ENCODE measurements at regions of chr20 and their contacts with region 1.

Region 1: GRCh38 chr20:10225439-10226060 is 6.9 kb downstream of the SNAP25 start:
- DNase-seq: no peak
- H3K4me3 ChIP-seq: no peak overlapping the region
- H3K27ac ChIP-seq: no peak overlapping the region
- H3K27me3 ChIP-seq: no peaks in the 10 kb centered on the region
- CTCF ChIP-seq: peak; percentile 41

Region 2: DNA sequence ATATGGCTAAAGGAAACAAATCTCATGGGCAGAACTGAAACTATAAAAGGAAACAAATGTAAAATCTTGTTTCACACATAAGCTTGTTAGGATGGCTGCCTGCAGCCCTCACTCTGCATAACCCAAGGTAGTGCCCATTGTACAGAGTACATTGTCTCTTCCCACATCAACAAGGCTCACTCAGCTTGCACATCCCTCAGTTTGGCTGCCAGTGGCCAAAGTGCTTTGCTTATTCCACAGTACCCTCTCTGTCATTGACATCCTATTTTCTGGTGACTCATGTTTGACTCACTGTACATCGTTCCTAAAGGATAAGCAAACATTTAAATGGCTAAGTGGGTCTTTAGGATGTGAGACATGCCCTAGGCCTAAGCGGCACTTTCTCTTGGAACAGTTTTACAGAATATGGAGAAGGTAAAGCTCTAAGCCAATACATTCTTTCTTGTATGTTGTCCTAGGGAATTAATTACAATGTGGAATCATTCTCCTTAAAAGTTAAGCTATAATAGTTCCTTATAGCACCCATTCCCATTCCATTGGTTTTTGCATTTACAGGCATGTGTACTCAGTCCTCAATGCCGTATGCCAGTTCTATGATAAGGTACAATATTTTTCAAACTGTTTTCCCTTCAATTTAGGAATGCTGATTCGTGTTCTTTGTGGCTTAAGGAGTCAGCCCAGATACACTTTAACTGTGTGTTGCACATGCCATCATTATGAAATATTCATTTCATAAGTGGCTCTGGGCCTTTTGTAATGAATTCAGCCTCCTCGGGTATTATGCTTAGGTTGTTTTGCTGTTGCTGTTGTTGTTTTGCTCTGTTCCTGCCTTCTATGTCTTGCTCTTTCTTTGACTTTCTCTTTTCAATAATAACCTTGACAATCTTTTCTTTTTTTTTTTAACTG is 185.2 kb before region 1 on chr20:
- CTCF ChIA-PET with region 1: no interaction called
- POLR2A ChIA-PET with region 1: no interaction called
- DNase-seq: peak; percentile 13
- H3K4me3 ChIP-seq: no peak overlapping the region
- H3K27ac ChIP-seq: no peak overlapping the region
- H3K27me3 ChIP-seq: no peaks in the 10 kb centered on the region
- CTCF ChIP-seq: no peak

Region 3: DNA sequence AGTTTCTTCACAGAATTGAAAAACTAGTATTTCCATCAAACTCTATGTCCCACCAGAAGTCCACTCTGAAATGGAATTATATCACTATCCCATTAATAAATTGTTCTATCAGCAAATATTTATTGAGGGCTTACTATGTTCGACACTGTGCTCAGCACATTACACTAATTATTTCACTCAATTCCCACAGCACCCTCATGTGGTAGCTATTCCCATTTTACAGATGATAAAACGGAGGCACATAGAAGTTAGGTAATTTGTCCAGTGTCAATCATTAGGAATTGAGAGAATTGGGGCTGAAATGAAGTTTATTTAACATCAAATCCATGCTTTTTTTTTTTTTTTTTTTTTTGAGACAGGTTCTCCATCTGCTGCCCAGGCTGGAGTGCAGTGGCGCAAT is 155.9 kb after region 1 on chr20:
- CTCF ChIA-PET with region 1: interaction called, 14 read pairs
- POLR2A ChIA-PET with region 1: no interaction called
- DNase-seq: no peak
- H3K4me3 ChIP-seq: no peak overlapping the region
- H3K27ac ChIP-seq: no peak overlapping the region
- H3K27me3 ChIP-seq: no peaks in the 10 kb centered on the region
- CTCF ChIP-seq: no peak

Measured in AG04450 (cell line).